Activated CD8-positive, alpha-beta T cell treated with anti-CD3 and anti-CD28 coated beads, Interleukin-2, amount 10 ng/mL, durations not matched to agents 7 days and 5 days (primary cell): ENCODE measurements at regions of chr16 and their contacts with region 1.

Region 1: DNA sequence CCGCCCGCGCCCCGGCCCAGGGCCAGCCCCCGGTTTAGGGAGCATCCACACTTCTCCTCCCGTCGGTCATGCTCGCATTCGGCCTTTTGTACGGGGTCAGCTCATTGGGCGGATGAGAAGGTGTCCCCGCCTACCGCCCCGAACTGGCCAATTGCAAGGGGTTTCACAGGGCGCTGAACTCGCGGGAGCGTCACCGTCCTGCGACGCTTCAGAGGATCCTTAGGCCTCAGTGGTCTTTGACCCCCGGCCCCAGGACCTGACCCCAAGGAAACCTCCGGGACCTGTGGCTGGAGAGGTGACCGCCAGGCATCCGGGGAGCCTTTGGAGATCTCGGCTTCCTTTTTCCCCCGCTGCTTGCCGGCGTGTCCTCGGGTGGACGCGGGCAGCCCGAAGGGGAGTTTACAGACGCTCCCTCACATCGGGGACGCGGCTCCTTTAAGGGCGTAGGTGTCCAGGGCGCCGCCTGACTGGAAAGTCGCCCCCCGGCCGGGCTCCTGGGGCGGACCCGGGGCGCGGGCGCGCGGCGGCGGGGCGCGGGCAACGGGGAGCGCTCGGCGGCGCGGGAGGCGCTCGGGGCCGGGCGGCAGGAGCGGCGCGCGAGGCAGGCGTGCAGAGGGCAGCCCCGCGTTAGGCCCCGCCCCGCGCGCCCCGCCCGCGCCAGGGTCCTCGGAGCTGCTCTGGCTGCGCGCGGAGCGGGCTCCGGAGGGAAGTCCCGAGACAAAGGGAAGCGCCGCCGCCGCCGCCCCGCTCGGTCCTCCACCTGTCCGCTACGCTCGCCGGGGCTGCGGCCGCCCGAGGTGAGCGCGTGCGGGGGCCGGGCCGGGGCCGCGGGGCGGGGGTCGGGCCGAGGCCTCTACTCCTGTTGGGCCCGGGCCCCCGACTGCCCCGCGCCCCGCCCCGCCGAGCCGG is at the start of gene UBE2I:
- DNase-seq: peak; percentile 97
- ATAC-seq: peak; percentile 76
- H3K4me3 Mint-ChIP-seq: peak within 1 kb of the TSS; percentile 97
- H3K27ac Mint-ChIP-seq: peak within 1 kb of the TSS; percentile 100
- H3K4me1 Mint-ChIP-seq: peaks cover 54% of the 10 kb centered on the region
- H3K27me3 Mint-ChIP-seq: no peaks in the 10 kb centered on the region
- total RNA-seq, gene UBE2I: 207 to 237 TPM

Region 2: GRCh38 chr16:1331712-1332617 is 22.7 kb after region 1 on chr16:
- CTCF ChIA-PET with region 1: interaction called, 3 read pairs
- POLR2A ChIA-PET with region 1: interaction called, 15 read pairs
- DNase-seq: peak; percentile 86
- ATAC-seq: peak; percentile 65
- H3K4me3 Mint-ChIP-seq: peak overlapping the region; percentile 17
- H3K27ac Mint-ChIP-seq: no peak overlapping the region
- H3K4me1 Mint-ChIP-seq: peaks cover 15% of the 10 kb centered on the region
- H3K27me3 Mint-ChIP-seq: peaks cover 30% of the 10 kb centered on the region

Region 3: DNA sequence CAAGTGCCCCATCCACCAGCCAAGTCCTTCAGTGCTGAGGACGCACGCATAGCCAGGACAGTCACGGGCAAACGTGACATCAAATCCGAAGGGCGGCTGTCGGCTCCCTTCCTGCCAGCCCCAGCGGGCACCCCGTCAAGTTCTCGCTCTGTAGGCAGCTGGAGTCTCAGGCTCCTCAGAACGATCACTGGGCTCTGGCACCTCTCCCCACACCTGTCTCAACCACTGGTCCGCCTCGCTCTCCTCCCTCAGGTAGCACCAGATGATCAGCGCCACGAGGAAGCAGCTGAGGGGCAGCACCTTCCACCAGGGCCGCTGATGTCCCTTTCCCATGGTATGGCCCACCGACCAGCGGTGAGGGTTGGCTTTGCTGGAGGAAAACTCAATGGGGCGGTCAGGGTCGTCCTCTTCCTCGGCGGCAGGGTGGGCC is 110.9 kb after region 1 on chr16:
- CTCF ChIA-PET with region 1: no interaction called
- POLR2A ChIA-PET with region 1: interaction called, 11 read pairs
- DNase-seq: peak; percentile 29
- ATAC-seq: peak; percentile 5
- H3K4me3 Mint-ChIP-seq: peak overlapping the region; percentile 90
- H3K27ac Mint-ChIP-seq: peak overlapping the region; percentile 99
- H3K4me1 Mint-ChIP-seq: peaks cover 33% of the 10 kb centered on the region
- H3K27me3 Mint-ChIP-seq: no peaks in the 10 kb centered on the region